ENCODE measurements at regions of chr10 and their contacts with region 1.

Region 1: GRCh38 chr10:97869091-97870042 is 19.7 kb downstream of the GOLGA7B start:
- DNase-seq: peak; percentile 65 to 93 (median 85)
- ATAC-seq: peak; percentile 99
- H3K4me3 ChIP-seq: peak overlapping the region; percentile 11 to 18
- H3K4me3 Mint-ChIP-seq: peak overlapping the region; percentile 43
- H3K27ac ChIP-seq: peak overlapping the region in 1 of 2 experiments; percentile 18
- H3K27ac Mint-ChIP-seq: peak overlapping the region; percentile 55
- H3K4me1 ChIP-seq: peaks cover 16% of the 10 kb centered on the region
- H3K4me1 Mint-ChIP-seq: peaks cover 12% of the 10 kb centered on the region
- H3K27me3 ChIP-seq: no peaks in the 10 kb centered on the region
- H3K27me3 Mint-ChIP-seq: peaks cover 8% of the 10 kb centered on the region
- CTCF ChIP-seq: peak; percentile 77

Region 2: GRCh38 chr10:96488161-96488935 is 1381.0 kb before region 1 on chr10:
- CTCF ChIA-PET with region 1: no interaction called
- POLR2A ChIA-PET with region 1: no interaction called
- intact Hi-C with region 1: no loop called
- DNase-seq: no peak
- ATAC-seq: no peak
- H3K4me3 ChIP-seq: no peak overlapping the region
- H3K4me3 Mint-ChIP-seq: no peak overlapping the region
- H3K27ac ChIP-seq: no peak overlapping the region
- H3K27ac Mint-ChIP-seq: no peak overlapping the region
- H3K4me1 ChIP-seq: no peaks in the 10 kb centered on the region
- H3K4me1 Mint-ChIP-seq: no peaks in the 10 kb centered on the region
- H3K27me3 ChIP-seq: no peaks in the 10 kb centered on the region
- H3K27me3 Mint-ChIP-seq: peaks cover 17% of the 10 kb centered on the region
- CTCF ChIP-seq: no peak

Region 3: GRCh38 chr10:97701438-97702069 is 167.8 kb before region 1 on chr10:
- CTCF ChIA-PET with region 1: interaction called, 24 read pairs
- POLR2A ChIA-PET with region 1: no interaction called
- intact Hi-C with region 1: no loop called
- DNase-seq: peak in 6 of 9 experiments; percentile 37 to 77 (median 56)
- ATAC-seq: peak; percentile 99
- H3K4me3 ChIP-seq: no peak overlapping the region
- H3K4me3 Mint-ChIP-seq: no peak overlapping the region
- H3K27ac ChIP-seq: no peak overlapping the region
- H3K27ac Mint-ChIP-seq: no peak overlapping the region
- H3K4me1 ChIP-seq: no peaks in the 10 kb centered on the region
- H3K4me1 Mint-ChIP-seq: no peaks in the 10 kb centered on the region
- H3K27me3 ChIP-seq: no peaks in the 10 kb centered on the region
- H3K27me3 Mint-ChIP-seq: peaks cover 11% of the 10 kb centered on the region
- CTCF ChIP-seq: peak; percentile 69

Region 4: GRCh38 chr10:97743169-97743943 is 126.0 kb before region 1 on chr10:
- CTCF ChIA-PET with region 1: interaction called, 10 read pairs
- POLR2A ChIA-PET with region 1: no interaction called
- intact Hi-C with region 1: no loop called
- DNase-seq: no peak
- ATAC-seq: no peak
- H3K4me3 ChIP-seq: no peak overlapping the region
- H3K4me3 Mint-ChIP-seq: no peak overlapping the region
- H3K27ac ChIP-seq: no peak overlapping the region
- H3K27ac Mint-ChIP-seq: no peak overlapping the region
- H3K4me1 ChIP-seq: peaks cover 22% of the 10 kb centered on the region
- H3K4me1 Mint-ChIP-seq: peaks cover 54% of the 10 kb centered on the region
- H3K27me3 ChIP-seq: no peaks in the 10 kb centered on the region
- H3K27me3 Mint-ChIP-seq: no peaks in the 10 kb centered on the region
- CTCF ChIP-seq: no peak

Region 5: DNA sequence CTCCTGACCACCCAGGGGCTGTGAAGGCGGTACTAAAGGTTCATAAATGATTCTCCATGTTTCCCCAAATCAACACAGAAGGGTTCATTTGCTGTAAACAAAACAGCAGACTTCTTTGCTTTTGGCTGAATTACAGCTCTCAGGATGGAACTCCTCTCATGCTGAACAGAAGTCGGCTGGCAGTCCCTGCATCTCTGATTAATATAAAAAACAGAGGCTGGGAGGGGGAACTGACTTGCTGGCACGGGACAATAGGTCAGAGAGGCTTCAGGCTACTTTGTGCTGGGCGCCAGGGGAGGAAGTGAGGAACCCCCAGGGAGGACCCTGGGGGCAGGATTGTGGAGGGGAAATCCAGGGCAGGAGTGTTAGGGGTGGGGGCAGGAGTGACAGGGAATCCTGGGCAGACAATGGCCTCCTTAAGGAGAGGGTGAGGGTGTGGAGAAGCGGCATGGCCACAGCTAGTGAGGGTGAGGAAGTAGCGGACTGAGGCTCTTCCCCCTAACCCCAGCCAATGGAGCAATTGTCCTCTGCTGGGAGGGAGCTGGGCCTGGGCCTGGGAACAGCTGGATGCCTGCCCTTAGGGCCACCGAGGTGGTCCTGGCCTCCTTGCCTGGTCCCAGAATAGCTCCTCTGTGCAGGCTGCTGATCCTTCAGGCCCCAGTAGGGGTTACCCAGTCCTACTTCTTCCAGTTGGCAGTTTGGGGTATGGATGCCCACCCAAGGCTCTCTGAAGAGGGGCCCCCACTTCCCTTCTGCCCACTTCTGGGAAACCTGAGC is 88.3 kb before region 1 on chr10:
- CTCF ChIA-PET with region 1: interaction called, 17 read pairs
- POLR2A ChIA-PET with region 1: interaction called, 4 read pairs
- intact Hi-C with region 1: no loop called
- DNase-seq: peak in 1 of 9 experiments; percentile 18
- ATAC-seq: no peak
- H3K4me3 ChIP-seq: peak overlapping the region in 1 of 2 experiments; percentile 36
- H3K4me3 Mint-ChIP-seq: peak overlapping the region; percentile 32
- H3K27ac ChIP-seq: peak overlapping the region; percentile 54 to 73
- H3K27ac Mint-ChIP-seq: peak overlapping the region; percentile 93
- H3K4me1 ChIP-seq: peaks cover 42% of the 10 kb centered on the region
- H3K4me1 Mint-ChIP-seq: peaks cover 43% of the 10 kb centered on the region
- H3K27me3 ChIP-seq: no peaks in the 10 kb centered on the region
- H3K27me3 Mint-ChIP-seq: no peaks in the 10 kb centered on the region
- CTCF ChIP-seq: no peak

Region 6: GRCh38 chr10:97827778-97828291 is 41.5 kb before region 1 on chr10:
- CTCF ChIA-PET with region 1: interaction called, 20 read pairs
- POLR2A ChIA-PET with region 1: interaction called, 3 read pairs
- intact Hi-C with region 1: no loop called
- DNase-seq: no peak
- ATAC-seq: no peak
- H3K4me3 ChIP-seq: no peak overlapping the region
- H3K4me3 Mint-ChIP-seq: no peak overlapping the region
- H3K27ac ChIP-seq: no peak overlapping the region
- H3K27ac Mint-ChIP-seq: no peak overlapping the region
- H3K4me1 ChIP-seq: peaks cover 29% of the 10 kb centered on the region
- H3K4me1 Mint-ChIP-seq: peaks cover 22% of the 10 kb centered on the region
- H3K27me3 ChIP-seq: no peaks in the 10 kb centered on the region
- H3K27me3 Mint-ChIP-seq: no peaks in the 10 kb centered on the region
- CTCF ChIP-seq: no peak

Region 7: GRCh38 chr10:97903128-97904017 is 34.0 kb after region 1 on chr10:
- CTCF ChIA-PET with region 1: interaction called, 11 read pairs
- POLR2A ChIA-PET with region 1: no interaction called
- intact Hi-C with region 1: no loop called
- DNase-seq: no peak
- ATAC-seq: no peak
- H3K4me3 ChIP-seq: no peak overlapping the region
- H3K4me3 Mint-ChIP-seq: no peak overlapping the region
- H3K27ac ChIP-seq: no peak overlapping the region
- H3K27ac Mint-ChIP-seq: no peak overlapping the region
- H3K4me1 ChIP-seq: no peaks in the 10 kb centered on the region
- H3K4me1 Mint-ChIP-seq: no peaks in the 10 kb centered on the region
- H3K27me3 ChIP-seq: no peaks in the 10 kb centered on the region
- H3K27me3 Mint-ChIP-seq: peaks cover 21% of the 10 kb centered on the region
- CTCF ChIP-seq: no peak

Region 8: GRCh38 chr10:98154076-98154475 is 284.7 kb after region 1 on chr10:
- CTCF ChIA-PET with region 1: no interaction called
- POLR2A ChIA-PET with region 1: no interaction called
- intact Hi-C with region 1: no loop called
- DNase-seq: no peak
- ATAC-seq: no peak
- H3K4me3 ChIP-seq: no peak overlapping the region
- H3K4me3 Mint-ChIP-seq: no peak overlapping the region
- H3K27ac ChIP-seq: no peak overlapping the region
- H3K27ac Mint-ChIP-seq: no peak overlapping the region
- H3K4me1 ChIP-seq: peaks cover 4% of the 10 kb centered on the region
- H3K4me1 Mint-ChIP-seq: peaks cover 36% of the 10 kb centered on the region
- H3K27me3 ChIP-seq: no peaks in the 10 kb centered on the region
- H3K27me3 Mint-ChIP-seq: no peaks in the 10 kb centered on the region
- CTCF ChIP-seq: no peak